ENCODE measurements at regions of chr4 and their contacts with region 1.

Region 1: DNA sequence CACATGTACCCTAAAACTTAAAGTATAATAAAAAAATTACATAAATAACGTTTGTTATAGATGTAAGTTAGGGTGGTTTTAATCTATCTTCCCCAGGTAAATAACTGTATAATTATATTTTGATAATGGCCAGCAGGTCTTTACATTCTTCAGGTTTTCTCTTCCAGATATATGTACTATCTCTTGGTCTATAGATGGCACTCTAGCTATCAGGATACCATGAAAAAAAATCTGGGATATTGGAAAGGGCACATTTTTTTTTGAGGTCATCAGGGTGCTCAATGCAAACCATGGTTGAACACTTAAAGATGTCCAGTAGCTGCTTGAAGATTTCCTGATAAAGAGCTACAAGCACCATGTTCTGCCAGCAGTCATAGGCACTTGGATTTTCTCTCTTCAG is 15.6 kb upstream of the ADH4 start:
- DNase-seq: no peak
- H3K4me3 ChIP-seq: no peak overlapping the region
- H3K4me3 Mint-ChIP-seq: no peak overlapping the region
- H3K27ac Mint-ChIP-seq: no peak overlapping the region
- H3K4me1 ChIP-seq: peaks cover 29% of the 10 kb centered on the region
- H3K4me1 Mint-ChIP-seq: peaks cover 24% of the 10 kb centered on the region
- H3K27me3 ChIP-seq: no peaks in the 10 kb centered on the region
- H3K27me3 Mint-ChIP-seq: no peaks in the 10 kb centered on the region
- CTCF ChIP-seq: no peak

Region 2: DNA sequence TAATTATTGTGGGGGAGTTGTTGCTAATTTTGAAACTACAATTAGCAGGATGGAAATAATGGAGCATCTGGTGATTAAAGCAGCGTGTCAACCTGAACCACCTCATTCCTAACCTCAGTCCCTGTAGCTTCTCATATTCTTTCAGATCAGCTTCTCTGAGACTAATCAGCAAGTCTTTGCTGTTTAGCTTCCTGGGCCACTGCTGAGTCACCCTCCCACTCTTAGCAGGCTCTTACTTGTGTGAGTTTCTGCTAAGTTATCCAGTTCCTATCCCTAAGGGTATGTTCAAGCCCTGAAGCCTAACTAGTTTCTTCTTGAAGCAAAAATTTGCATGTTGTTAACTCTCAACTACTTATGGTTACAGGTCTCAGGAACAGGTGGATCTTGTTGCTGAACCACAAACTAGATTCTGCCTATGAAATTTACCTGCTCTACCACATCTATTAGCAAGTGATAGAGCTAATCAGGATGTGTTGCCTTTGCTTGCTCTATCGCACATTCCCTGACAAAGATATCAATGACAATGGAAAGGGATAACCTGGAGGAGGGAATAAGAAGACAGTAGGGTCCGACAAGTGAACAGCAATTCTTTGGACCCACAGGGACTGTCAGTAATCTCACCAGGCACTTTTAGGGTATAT is 365.0 kb before region 1 on chr4:
- CTCF ChIA-PET with region 1: no interaction called
- POLR2A ChIA-PET with region 1: no interaction called
- intact Hi-C with region 1: no loop called
- DNase-seq: no peak
- H3K4me3 ChIP-seq: no peak overlapping the region
- H3K4me3 Mint-ChIP-seq: no peak overlapping the region
- H3K27ac Mint-ChIP-seq: no peak overlapping the region
- H3K4me1 ChIP-seq: peaks cover 22% of the 10 kb centered on the region
- H3K4me1 Mint-ChIP-seq: peaks cover 7% of the 10 kb centered on the region
- H3K27me3 ChIP-seq: no peaks in the 10 kb centered on the region
- H3K27me3 Mint-ChIP-seq: no peaks in the 10 kb centered on the region
- CTCF ChIP-seq: no peak

Region 3: DNA sequence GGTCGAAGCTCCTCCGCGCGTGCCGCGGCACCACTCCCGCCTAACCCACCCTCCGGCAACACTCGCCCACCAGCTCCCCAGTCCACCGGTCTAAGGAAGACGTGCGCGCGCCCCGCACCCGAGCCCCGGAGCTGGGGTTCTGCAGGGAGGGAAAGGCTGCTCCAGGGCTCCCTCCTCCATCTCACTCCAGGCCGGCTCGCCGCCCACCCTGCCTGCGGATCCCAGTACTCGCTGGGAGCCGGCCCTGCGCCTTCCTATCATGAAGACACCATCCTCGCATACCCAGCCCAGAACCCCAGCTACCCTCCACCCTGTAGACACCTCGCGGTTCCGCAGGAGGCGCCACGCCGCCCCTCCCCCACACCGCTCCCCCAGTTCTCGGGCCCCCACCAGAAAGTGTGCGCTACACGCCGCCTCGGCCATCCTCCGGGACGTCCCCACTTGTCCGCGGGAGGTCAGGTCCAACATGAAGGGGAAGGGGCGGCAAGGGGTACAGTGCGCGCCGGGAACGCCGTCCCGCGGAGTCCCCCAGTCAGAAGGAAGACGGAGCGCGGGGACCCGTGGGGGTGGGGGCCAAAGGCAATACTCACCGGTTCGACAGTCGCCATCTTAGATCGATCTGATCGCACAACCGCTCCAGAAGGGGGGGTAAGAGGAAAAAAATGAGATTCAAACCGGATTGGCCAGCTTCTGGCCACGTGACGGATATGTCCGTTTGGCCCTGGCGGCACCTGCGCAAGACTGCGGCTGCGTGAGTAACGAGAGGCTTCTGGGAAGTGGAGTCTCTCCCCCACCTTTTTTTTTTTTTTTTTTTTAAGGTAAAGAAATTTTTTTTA is 231.0 kb before region 1 on chr4 and contains the start of gene EIF4E:
- CTCF ChIA-PET with region 1: no interaction called
- POLR2A ChIA-PET with region 1: no interaction called
- intact Hi-C with region 1: loop called (anchors 5 kb)
- DNase-seq: peak; percentile 97 to 99
- H3K4me3 ChIP-seq: peak within 1 kb of the TSS; percentile 95
- H3K4me3 Mint-ChIP-seq: peak within 1 kb of the TSS; percentile 81
- H3K27ac Mint-ChIP-seq: peak within 1 kb of the TSS; percentile 85
- H3K4me1 ChIP-seq: peaks cover 6% of the 10 kb centered on the region
- H3K4me1 Mint-ChIP-seq: peaks cover 7% of the 10 kb centered on the region
- H3K27me3 ChIP-seq: no peaks in the 10 kb centered on the region
- H3K27me3 Mint-ChIP-seq: no peaks in the 10 kb centered on the region
- CTCF ChIP-seq: peak in 1 of 2 experiments; percentile 10
- total RNA-seq, gene EIF4E: 140 and 151 TPM in 2 replicates

Region 4: DNA sequence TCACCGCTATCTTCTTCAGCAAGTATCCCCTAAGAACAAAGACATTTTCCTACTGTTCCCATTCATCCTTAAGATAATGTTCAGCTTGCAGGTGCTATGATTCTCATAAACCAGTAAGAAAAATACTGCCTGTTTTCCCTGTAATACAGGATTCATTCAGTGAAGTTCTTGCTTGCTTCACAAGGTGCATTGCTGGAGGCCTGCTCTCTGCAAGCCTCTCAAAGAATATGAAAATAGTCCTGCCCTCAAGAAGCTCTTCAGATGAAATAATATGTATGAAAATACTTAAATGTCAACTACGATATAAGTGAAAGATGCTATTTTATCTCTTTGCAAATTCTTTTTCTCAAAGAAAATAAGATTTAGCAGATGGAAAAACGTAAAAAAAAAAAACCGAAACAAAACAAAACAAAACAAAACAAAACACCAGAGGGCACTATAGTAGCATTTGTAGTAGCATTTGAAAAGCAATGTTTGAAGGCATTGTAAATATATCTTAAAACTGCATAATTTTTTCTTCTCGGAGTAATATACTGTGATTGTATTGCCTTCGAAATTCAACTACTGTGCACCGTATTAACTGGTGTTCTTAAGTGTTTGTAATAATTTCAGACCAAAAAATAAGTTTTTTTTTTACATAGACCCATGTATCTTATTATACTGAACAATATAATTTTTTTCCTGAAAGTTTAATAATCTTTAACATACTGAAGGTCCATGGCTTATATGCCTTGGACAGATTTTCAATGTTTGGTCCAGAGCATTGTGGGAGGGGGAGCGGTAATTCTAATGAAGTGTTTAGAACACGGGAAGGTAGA is 41.6 kb before region 1 on chr4:
- CTCF ChIA-PET with region 1: no interaction called
- POLR2A ChIA-PET with region 1: no interaction called
- intact Hi-C with region 1: loop called (anchors 2 kb)
- DNase-seq: no peak
- H3K4me3 ChIP-seq: no peak overlapping the region
- H3K4me3 Mint-ChIP-seq: no peak overlapping the region
- H3K27ac Mint-ChIP-seq: no peak overlapping the region
- H3K4me1 ChIP-seq: no peaks in the 10 kb centered on the region
- H3K4me1 Mint-ChIP-seq: no peaks in the 10 kb centered on the region
- H3K27me3 ChIP-seq: no peaks in the 10 kb centered on the region
- H3K27me3 Mint-ChIP-seq: no peaks in the 10 kb centered on the region
- CTCF ChIP-seq: peak in 1 of 2 experiments; percentile 3

Region 5: GRCh38 chr4:99136329-99136728 is 23.4 kb before region 1 on chr4:
- CTCF ChIA-PET with region 1: no interaction called
- POLR2A ChIA-PET with region 1: no interaction called
- intact Hi-C with region 1: no loop called
- DNase-seq: no peak
- H3K4me3 ChIP-seq: no peak overlapping the region
- H3K4me3 Mint-ChIP-seq: no peak overlapping the region
- H3K27ac Mint-ChIP-seq: no peak overlapping the region
- H3K4me1 ChIP-seq: no peaks in the 10 kb centered on the region
- H3K4me1 Mint-ChIP-seq: no peaks in the 10 kb centered on the region
- H3K27me3 ChIP-seq: no peaks in the 10 kb centered on the region
- H3K27me3 Mint-ChIP-seq: no peaks in the 10 kb centered on the region
- CTCF ChIP-seq: no peak

Region 6: GRCh38 chr4:99190336-99190735 is 30.6 kb after region 1 on chr4:
- CTCF ChIA-PET with region 1: no interaction called
- POLR2A ChIA-PET with region 1: no interaction called
- intact Hi-C with region 1: loop called (anchors 1 kb)
- DNase-seq: no peak
- H3K4me3 ChIP-seq: no peak overlapping the region
- H3K4me3 Mint-ChIP-seq: no peak overlapping the region
- H3K27ac Mint-ChIP-seq: no peak overlapping the region
- H3K4me1 ChIP-seq: peaks cover 7% of the 10 kb centered on the region; the same call in 1 of the 2 replicates
- H3K4me1 Mint-ChIP-seq: peaks cover 7% of the 10 kb centered on the region
- H3K27me3 ChIP-seq: no peaks in the 10 kb centered on the region
- H3K27me3 Mint-ChIP-seq: no peaks in the 10 kb centered on the region
- CTCF ChIP-seq: no peak

Region 7: GRCh38 chr4:99339172-99339571 is 179.5 kb after region 1 on chr4:
- CTCF ChIA-PET with region 1: no interaction called
- POLR2A ChIA-PET with region 1: no interaction called
- intact Hi-C with region 1: no loop called
- DNase-seq: no peak
- H3K4me3 ChIP-seq: no peak overlapping the region
- H3K4me3 Mint-ChIP-seq: no peak overlapping the region
- H3K27ac Mint-ChIP-seq: no peak overlapping the region
- H3K4me1 ChIP-seq: no peaks in the 10 kb centered on the region
- H3K4me1 Mint-ChIP-seq: no peaks in the 10 kb centered on the region
- H3K27me3 ChIP-seq: no peaks in the 10 kb centered on the region
- H3K27me3 Mint-ChIP-seq: no peaks in the 10 kb centered on the region
- CTCF ChIP-seq: no peak

Region 8: GRCh38 chr4:99405433-99406115 is 245.9 kb after region 1 on chr4:
- CTCF ChIA-PET with region 1: no interaction called
- POLR2A ChIA-PET with region 1: no interaction called
- intact Hi-C with region 1: loop called (anchors 1 kb)
- DNase-seq: peak; percentile 69 to 78
- H3K4me3 ChIP-seq: no peak overlapping the region
- H3K4me3 Mint-ChIP-seq: no peak overlapping the region
- H3K27ac Mint-ChIP-seq: peak overlapping the region; percentile 37
- H3K4me1 ChIP-seq: peaks cover 23% of the 10 kb centered on the region
- H3K4me1 Mint-ChIP-seq: peaks cover 11% of the 10 kb centered on the region
- H3K27me3 ChIP-seq: no peaks in the 10 kb centered on the region
- H3K27me3 Mint-ChIP-seq: no peaks in the 10 kb centered on the region
- CTCF ChIP-seq: peak; percentile 77 to 88